Naive thymus-derived CD4-positive, alpha-beta T cell (primary cell): ENCODE measurements at regions of chr20 and their contacts with region 1.

Region 1: DNA sequence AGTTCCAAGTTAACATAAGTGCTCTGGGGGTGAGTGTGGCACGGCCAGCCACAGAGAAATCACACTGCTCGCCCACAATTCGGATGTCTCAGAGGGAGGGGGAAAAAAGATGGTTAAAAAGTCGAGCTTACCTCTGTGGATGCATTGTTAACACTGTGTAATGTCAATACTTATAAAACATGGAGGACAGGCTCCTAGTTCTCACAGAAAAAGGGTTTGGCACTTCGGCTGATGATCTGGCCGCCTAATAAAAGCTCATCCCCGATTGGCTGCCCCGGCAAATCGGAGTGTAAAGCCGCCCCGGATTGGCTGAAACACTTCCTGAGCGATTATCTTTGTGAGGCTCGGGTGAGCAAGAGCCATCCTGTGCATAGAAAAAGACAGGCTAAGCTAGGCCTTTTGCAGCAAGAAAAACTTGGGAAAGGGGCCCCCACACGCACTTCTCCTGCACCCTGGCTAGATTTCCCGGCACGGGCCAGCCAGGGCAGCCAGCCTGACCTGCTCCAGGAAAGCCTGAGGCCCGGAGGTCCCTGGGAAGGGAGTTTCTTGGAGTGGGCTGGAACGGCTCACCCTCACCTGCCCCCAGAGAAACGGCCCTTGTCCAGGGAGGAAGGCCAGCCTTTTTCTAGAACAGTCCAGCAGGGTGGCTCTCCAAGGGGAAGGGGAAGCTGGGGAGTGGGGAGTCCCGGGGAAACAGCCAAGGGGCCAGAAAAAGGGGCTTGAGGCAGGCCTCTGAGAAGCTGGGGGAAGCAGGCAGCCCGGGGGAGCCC is at the start of gene ZMYND8:
- DNase-seq: peak; percentile 88 to 100 (median 98)
- ATAC-seq: peak; percentile 91
- H3K4me3 ChIP-seq: peak within 1 kb of the TSS; percentile 75
- H3K4me3 Mint-ChIP-seq: peak within 1 kb of the TSS in 4 of 10 donors; percentile 88 to 95 (median 92)
- H3K27ac ChIP-seq: peak within 1 kb of the TSS; percentile 86
- H3K27ac Mint-ChIP-seq: peak within 1 kb of the TSS in 7 of 9 donors; percentile 97 to 100 (median 99)
- H3K4me1 ChIP-seq: peaks cover 47 to 65% of the 10 kb centered on the region in 2 donors
- H3K4me1 Mint-ChIP-seq: peaks cover 51 to 74% (median 53%) of the 10 kb centered on the region in 7 donors
- H3K27me3 ChIP-seq: no peaks in the 10 kb centered on the region
- H3K27me3 Mint-ChIP-seq: no peaks in the 10 kb centered on the region
- total RNA-seq, gene ZMYND8: 54.5 to 83.0 (median 68.5) TPM

Region 2: GRCh38 chr20:47317127-47317895 is 39.4 kb before region 1 on chr20:
- CTCF ChIA-PET with region 1: interaction called, 3 read pairs
- POLR2A ChIA-PET with region 1: interaction called, 7 read pairs
- intact Hi-C with region 1: loop called (anchors 2 to 5 kb)
- DNase-seq: peak in 6 of 9 donors; percentile 7 to 67 (median 16)
- ATAC-seq: peak; percentile 73
- H3K4me3 ChIP-seq: no peak overlapping the region
- H3K4me3 Mint-ChIP-seq: peak overlapping the region in 9 of 10 donors; percentile 18 to 80 (median 57)
- H3K27ac ChIP-seq: peak overlapping the region; percentile 55
- H3K27ac Mint-ChIP-seq: peak overlapping the region in 8 of 9 donors; percentile 60 to 92 (median 86)
- H3K4me1 ChIP-seq: peaks cover 15 to 30% of the 10 kb centered on the region in 2 donors
- H3K4me1 Mint-ChIP-seq: peaks cover 29 to 85% (median 75%) of the 10 kb centered on the region in 7 donors
- H3K27me3 ChIP-seq: no peaks in the 10 kb centered on the region
- H3K27me3 Mint-ChIP-seq: no peaks in the 10 kb centered on the region

Region 3: GRCh38 chr20:47389867-47390347 is 33.2 kb after region 1 on chr20:
- CTCF ChIA-PET with region 1: interaction called, 21 read pairs
- POLR2A ChIA-PET with region 1: interaction called, 10 read pairs
- intact Hi-C with region 1: loop called in 1 of 2 experiments (anchors 2 kb)
- DNase-seq: no peak
- ATAC-seq: peak; percentile 49
- H3K4me3 ChIP-seq: no peak overlapping the region
- H3K4me3 Mint-ChIP-seq: no peak overlapping the region
- H3K27ac ChIP-seq: no peak overlapping the region
- H3K27ac Mint-ChIP-seq: peak overlapping the region in 1 of 9 donors; percentile 33
- H3K4me1 ChIP-seq: no peaks in the 10 kb centered on the region
- H3K4me1 Mint-ChIP-seq: peaks cover 0 to 16% (median 0%) of the 10 kb centered on the region in 7 donors
- H3K27me3 ChIP-seq: no peaks in the 10 kb centered on the region
- H3K27me3 Mint-ChIP-seq: no peaks in the 10 kb centered on the region